ENCODE measurements at regions of chr19 and their contacts with region 1.

Region 1: DNA sequence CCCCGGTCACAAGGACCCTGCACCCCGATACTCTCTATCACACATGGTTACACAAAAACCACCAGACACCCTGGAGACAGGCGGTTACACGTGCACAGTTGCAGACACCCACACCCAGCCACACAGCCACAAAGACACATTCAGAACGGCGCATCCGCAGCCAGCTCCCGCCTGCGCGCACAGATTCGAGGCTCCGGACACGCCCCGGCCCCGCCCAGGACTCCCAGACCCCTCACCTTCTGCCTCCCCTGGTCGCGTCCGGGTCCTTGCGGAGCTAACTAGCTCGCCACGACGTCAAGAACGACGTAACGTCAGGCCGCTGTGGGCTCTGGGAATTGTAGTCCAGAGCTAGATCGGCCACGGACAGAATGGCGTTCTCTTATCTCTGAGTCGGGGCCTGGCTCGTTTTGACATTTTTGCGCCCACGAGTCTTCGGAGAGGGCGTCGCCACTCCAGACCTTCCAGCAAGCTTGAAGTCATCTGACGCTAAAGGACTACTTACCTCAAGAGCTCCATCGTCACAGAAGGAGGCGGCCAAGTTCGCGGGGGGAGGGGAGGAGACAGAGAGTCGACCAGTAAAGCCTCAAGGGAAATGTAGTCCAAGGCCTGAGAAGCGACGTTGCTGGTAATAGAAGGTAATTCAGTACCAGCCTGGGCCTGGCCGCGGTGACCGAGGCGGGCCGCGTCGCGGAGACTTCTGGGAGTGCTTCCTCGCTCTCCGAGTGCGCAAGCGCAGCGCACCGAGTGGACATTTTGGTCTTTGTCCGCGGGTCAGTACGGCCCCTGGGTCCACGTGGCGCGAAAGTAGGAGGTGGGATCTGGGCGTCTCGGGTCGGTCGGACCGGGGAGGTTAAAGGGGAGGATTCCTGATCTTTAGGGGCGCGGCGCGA is at the starts of genes ZNF146 and ZNF565:
- DNase-seq: peak; percentile 99
- ATAC-seq: peak; percentile 88
- H3K4me3 Mint-ChIP-seq: no peak within 1 kb of the TSS
- H3K27ac Mint-ChIP-seq: no peak within 1 kb of the TSS
- H3K4me1 Mint-ChIP-seq: peaks cover 25% of the 10 kb centered on the region
- H3K27me3 Mint-ChIP-seq: no peaks in the 10 kb centered on the region
- total RNA-seq, gene ZNF146: 105 to 111 TPM
- total RNA-seq, gene ZNF565: 2.8 to 2.9 TPM

Region 2: DNA sequence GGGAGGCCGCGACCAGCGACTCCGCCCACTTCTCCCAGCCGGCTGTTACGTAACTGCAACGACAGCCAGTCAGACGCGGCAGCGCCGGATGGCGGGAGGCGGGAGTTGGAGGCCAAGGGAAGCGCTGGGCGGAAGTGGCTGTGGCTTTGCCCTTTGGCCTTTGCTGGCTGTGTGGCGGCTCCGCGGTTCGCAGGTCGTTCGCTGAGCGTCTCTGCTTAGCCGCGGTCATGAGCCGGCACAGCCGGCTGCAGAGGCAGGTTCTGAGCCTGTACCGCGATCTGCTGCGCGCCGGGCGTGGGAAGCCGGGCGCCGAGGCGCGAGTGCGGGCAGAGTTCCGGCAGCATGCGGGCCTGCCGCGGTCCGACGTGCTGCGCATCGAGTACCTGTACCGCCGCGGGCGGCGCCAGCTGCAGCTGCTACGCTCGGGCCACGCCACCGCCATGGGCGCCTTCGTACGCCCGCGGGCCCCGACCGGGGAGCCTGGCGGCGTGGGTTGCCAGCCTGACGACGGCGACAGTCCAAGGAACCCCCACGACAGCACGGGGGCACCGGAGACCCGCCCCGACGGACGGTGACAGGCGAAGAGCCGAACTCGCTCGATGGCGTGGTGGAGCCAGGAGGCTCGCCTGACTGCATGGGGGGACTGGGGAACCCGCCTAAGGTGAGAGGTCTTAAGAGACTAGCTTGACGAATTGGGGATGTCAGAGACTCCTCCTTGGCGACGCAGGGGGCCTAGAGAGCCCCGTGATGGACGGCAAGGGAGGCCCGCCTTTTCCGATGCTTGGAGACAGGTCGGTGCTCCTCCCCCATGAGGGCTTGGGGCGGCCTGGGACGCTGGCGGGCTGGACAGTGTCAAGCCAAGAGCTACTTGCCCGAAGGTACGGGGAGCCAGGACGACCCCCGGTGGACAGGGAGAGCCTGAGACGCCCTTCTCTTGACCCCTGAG is 219.3 kb before region 1 on chr19 and contains the start of gene SDHAF1:
- CTCF ChIA-PET with region 1: no interaction called
- POLR2A ChIA-PET with region 1: no interaction called
- intact Hi-C with region 1: loop called in 1 of 2 experiments (anchors 1 kb)
- DNase-seq: peak; percentile 98
- ATAC-seq: peak; percentile 85
- H3K4me3 Mint-ChIP-seq: peak within 1 kb of the TSS; percentile 94
- H3K27ac Mint-ChIP-seq: peak within 1 kb of the TSS; percentile 96
- H3K4me1 Mint-ChIP-seq: peaks cover 34% of the 10 kb centered on the region
- H3K27me3 Mint-ChIP-seq: no peaks in the 10 kb centered on the region
- total RNA-seq, gene SDHAF1: 16.0 to 19.2 TPM

Region 3: DNA sequence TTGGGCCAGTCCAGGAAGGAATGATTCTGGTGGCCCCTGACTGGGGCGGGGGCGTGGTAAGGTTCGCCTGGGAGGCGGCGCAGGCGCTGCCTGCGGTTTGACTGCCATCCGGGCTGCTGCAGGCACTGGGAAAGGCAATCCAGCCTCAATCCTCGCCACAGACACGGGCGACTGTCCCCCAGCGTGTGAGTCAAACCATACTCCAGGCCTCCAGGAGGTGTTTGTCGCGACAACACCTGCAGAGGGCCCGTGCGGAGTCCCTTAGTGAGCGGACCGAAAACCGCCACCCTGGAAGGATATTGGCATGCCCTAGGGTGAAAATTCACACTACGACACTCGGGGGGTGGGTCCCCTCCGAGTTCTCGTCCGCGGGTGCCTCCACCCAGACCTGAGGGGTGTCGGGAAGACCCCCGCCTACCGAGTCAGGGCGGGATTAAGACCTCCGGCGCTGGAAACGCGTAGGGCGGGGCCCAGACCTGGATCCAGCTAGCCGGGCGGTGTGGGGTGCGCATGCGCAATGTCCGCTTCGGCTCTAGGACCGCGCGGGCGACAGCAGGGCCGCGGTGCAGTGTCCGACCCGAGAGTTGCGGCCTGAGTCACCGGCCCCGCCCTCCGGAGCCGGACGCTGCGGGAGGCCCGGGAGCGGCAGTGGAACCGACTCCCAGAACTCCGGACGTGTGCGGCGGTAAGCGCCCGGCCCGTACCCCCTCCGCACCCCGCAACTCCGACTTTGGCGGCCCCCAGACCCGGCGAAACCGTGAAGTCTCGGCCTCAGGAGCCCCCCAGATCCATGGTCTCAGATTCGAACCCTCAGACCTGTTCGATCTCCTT is 74.9 kb before region 1 on chr19 and contains the start of gene CAPNS1:
- CTCF ChIA-PET with region 1: no interaction called
- POLR2A ChIA-PET with region 1: no interaction called
- intact Hi-C with region 1: loop called in 1 of 2 experiments (anchors 1 kb)
- DNase-seq: peak; percentile 96
- ATAC-seq: peak; percentile 74
- H3K4me3 Mint-ChIP-seq: peak within 1 kb of the TSS; percentile 97
- H3K27ac Mint-ChIP-seq: peak within 1 kb of the TSS; percentile 97
- H3K4me1 Mint-ChIP-seq: peaks cover 26% of the 10 kb centered on the region
- H3K27me3 Mint-ChIP-seq: no peaks in the 10 kb centered on the region
- total RNA-seq, gene CAPNS1: 345 to 452 TPM

Region 4: DNA sequence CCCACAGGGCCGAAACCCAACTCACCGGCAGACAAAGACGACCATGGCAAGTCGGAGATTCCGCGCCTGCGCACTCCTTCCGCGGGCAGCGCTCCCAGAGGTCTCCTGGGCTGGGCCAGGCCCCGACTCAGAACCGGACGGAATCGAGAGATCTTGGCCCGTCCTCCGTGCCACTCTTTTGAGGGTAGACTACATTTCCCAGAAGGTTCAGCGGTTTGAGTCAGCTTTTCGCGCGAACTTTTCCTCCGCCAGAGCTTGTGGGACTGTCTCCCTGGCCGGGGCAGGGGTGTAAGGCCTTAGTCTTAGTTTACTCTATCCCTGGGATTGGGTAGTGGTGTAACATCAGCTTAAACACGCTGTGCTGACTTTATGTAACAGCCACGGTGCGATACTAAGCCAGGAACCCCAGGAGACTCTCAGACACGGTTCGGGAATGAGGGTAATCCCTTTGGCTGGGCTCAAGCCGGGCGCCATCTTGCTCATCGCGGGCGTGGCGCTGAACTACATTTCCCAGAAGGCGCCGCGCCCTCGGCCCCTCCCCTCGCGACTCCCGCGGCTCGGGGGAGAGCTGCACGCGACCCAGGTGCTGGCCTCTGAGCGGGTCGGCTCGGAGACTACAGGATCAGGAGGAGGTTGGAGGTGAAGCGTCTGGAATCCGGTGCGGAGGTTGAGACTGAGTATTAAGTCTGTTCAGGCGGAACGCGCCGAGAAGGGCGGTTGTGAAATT is 313.7 kb after region 1 on chr19 and contains the start of gene ZNF260:
- CTCF ChIA-PET with region 1: no interaction called
- POLR2A ChIA-PET with region 1: interaction called, 4 read pairs
- intact Hi-C with region 1: loop called (anchors 1 kb)
- DNase-seq: peak; percentile 97
- ATAC-seq: peak; percentile 91
- H3K4me3 Mint-ChIP-seq: peak within 1 kb of the TSS; percentile 87
- H3K27ac Mint-ChIP-seq: peak within 1 kb of the TSS; percentile 96
- H3K4me1 Mint-ChIP-seq: peaks cover 14% of the 10 kb centered on the region
- H3K27me3 Mint-ChIP-seq: no peaks in the 10 kb centered on the region
- total RNA-seq, gene ZNF260: 5.7 to 8.2 TPM

Region 5: GRCh38 chr19:36772311-36773222 is 557.9 kb after region 1 on chr19 and contains the start of gene ZNF850:
- CTCF ChIA-PET with region 1: no interaction called
- POLR2A ChIA-PET with region 1: no interaction called
- intact Hi-C with region 1: loop called in 1 of 2 experiments (anchors 1 kb)
- DNase-seq: peak; percentile 97
- ATAC-seq: peak; percentile 92
- H3K4me3 Mint-ChIP-seq: peak within 1 kb of the TSS; percentile 99
- H3K27ac Mint-ChIP-seq: peak within 1 kb of the TSS; percentile 97
- H3K4me1 Mint-ChIP-seq: peaks cover 20% of the 10 kb centered on the region
- H3K27me3 Mint-ChIP-seq: no peaks in the 10 kb centered on the region
- total RNA-seq, gene ZNF850: 7.0 to 10.7 TPM

Region 6: GRCh38 chr19:37217855-37218591 is 1003.4 kb after region 1 on chr19 and contains the start of gene ZNF383:
- CTCF ChIA-PET with region 1: no interaction called
- POLR2A ChIA-PET with region 1: no interaction called
- intact Hi-C with region 1: loop called (anchors 1 to 2 kb)
- DNase-seq: peak; percentile 89
- ATAC-seq: peak; percentile 87
- H3K4me3 Mint-ChIP-seq: peak within 1 kb of the TSS; percentile 93
- H3K27ac Mint-ChIP-seq: peak within 1 kb of the TSS; percentile 99
- H3K4me1 Mint-ChIP-seq: peaks cover 24% of the 10 kb centered on the region
- H3K27me3 Mint-ChIP-seq: no peaks in the 10 kb centered on the region
- total RNA-seq, gene ZNF383: 8.5 to 9.2 TPM